ENCODE measurements at regions of chr21 and their contacts with region 1.

Region 1: DNA sequence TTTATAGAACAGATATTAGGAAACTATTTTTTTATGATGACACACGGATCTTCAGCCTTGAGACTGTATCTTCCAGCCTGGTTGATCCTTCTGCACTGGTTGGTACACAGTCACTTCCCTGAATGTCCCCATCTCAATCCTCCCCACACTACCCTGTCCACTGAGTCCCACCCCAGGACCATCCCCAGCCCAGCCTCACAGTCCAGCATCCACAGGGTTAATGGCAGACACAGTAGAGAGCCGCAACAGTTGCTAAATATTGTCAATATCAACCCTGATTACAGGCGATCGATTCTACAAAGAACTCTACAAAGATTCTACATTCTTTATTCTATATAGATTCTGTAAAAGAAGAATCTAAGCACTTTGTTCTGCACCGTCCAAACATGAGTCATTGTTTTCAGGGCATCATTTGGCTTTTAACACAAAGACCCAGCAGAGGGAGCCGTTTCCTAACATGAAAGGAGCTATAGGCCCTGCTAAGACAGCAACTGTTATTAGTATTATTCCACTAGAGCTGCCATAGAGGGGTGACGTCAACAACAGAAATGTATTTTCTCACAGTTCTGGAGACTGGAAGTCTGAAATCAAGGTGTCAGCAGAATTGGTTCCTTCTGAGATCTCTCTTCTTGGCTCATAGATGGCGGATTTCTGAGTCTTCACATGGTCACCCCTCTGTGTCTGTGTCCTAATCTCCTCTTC is 30.1 kb upstream of the IFNAR2 start:
- DNase-seq: peak; percentile 73
- CTCF ChIP-seq: peak; percentile 76

Region 2: GRCh38 chr21:32940079-32941014 is 259.3 kb before region 1 on chr21:
- CTCF ChIA-PET with region 1: interaction called, 15 read pairs
- POLR2A ChIA-PET with region 1: no interaction called
- DNase-seq: peak; percentile 47
- CTCF ChIP-seq: peak; percentile 66

Region 3: GRCh38 chr21:33238565-33239255 is 39.0 kb after region 1 on chr21:
- CTCF ChIA-PET with region 1: interaction called, 13 read pairs
- POLR2A ChIA-PET with region 1: interaction called, 3 read pairs
- DNase-seq: peak; percentile 70
- CTCF ChIP-seq: no peak

Region 4: GRCh38 chr21:33332143-33332542 is 132.5 kb after region 1 on chr21:
- CTCF ChIA-PET with region 1: interaction called, 11 read pairs
- POLR2A ChIA-PET with region 1: no interaction called
- DNase-seq: peak; percentile 41
- CTCF ChIP-seq: no peak

Region 5: GRCh38 chr21:33441489-33442477 is 242.1 kb after region 1 on chr21:
- CTCF ChIA-PET with region 1: interaction called, 74 read pairs
- POLR2A ChIA-PET with region 1: interaction called, 3 read pairs
- DNase-seq: peak; percentile 73
- CTCF ChIP-seq: no peak